Prostate gland (tissue), 2 donors: ENCODE measurements at regions of chr9 and their contacts with region 1.

Region 1: GRCh38 chr9:133792721-133793470 is 54.7 kb upstream of the SARDH start:
- DNase-seq: peak; percentile 60
- H3K4me3 ChIP-seq: no peak overlapping the region
- H3K27ac ChIP-seq: no peak overlapping the region
- H3K4me1 ChIP-seq: peaks cover 3% of the 10 kb centered on the region
- H3K27me3 ChIP-seq: no peaks in the 10 kb centered on the region
- CTCF ChIP-seq: peak; percentile 93 to 98 (median 96)
- POLR2A ChIP-seq: no peak

Region 2: DNA sequence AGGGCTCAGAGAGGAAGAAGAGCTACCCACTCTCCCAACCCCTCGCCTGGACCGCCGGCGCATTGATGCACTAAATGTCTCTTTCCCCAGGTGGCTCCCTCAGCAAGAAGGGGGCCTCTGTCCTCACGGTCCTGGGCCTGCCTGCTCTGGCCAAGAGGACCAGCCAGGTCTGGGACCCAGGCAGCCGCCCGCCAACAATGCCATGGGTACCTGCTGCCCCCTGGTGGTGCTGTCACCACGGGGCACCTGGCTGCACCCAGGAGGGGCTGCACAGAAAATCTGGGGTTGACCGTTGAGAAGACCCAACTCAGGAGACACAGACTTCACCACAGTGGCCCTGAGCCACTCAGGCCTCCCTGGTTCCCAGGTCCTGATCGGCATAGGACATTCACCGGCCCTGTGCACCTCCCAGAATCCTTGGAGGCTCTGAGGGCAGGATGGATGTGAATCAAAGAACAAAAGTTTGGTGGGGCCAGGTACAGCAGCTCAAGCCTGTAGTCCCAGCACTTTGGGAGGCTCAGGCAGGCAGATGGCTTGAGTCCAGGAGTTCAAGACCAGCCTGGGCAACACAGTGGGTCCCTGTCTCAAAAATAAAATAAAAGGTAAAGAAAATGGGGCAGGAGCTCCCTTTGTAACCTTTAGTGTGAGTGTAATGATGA is 201.6 kb after region 1 on chr9:
- intact Hi-C with region 1: loop called (anchors 1 kb)
- DNase-seq: peak; percentile 64
- H3K4me3 ChIP-seq: no peak overlapping the region
- H3K27ac ChIP-seq: no peak overlapping the region
- H3K4me1 ChIP-seq: no peaks in the 10 kb centered on the region
- H3K27me3 ChIP-seq: no peaks in the 10 kb centered on the region
- CTCF ChIP-seq: peak; percentile 98 to 100 (median 99)
- POLR2A ChIP-seq: no peak

Region 3: DNA sequence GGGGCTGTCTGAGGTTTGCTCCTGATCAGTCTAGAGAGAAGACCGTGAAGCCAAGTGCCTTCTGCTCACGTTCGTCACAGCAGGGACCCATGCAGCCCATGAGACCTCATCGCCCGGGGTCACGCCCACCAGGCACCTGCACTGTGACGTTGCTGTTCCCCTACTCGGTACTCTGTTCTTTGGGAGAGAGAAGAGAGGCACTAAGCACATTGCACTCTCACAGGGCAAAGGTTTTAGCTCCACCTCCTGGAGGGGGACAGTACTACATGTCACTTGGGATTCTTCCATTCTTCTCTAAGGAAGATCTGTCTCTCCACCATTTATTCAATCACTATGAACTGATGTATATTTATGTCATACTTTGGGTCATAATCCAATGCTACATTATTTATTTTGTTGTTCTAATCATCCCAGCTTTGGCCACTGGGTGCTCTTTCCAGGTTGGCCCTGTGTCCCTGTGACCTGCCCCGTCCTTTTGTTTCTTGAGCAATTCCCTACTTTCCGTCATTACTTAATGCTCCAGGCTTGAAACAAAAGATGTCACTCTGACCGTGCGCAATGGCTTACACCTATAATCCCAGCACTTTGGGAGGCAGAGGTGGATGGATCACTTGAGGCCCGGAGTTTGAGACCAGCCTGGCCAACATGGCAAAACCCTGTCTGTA is 306.4 kb after region 1 on chr9:
- intact Hi-C with region 1: loop called (anchors 10 kb)
- DNase-seq: peak; percentile 26
- H3K4me3 ChIP-seq: no peak overlapping the region
- H3K27ac ChIP-seq: no peak overlapping the region
- H3K4me1 ChIP-seq: no peaks in the 10 kb centered on the region
- H3K27me3 ChIP-seq: no peaks in the 10 kb centered on the region
- CTCF ChIP-seq: peak in 3 of 4 experiments; percentile 46 to 80 (median 68)
- POLR2A ChIP-seq: no peak